ENCODE measurements at regions of chr7 and their contacts with region 1.

Region 1: DNA sequence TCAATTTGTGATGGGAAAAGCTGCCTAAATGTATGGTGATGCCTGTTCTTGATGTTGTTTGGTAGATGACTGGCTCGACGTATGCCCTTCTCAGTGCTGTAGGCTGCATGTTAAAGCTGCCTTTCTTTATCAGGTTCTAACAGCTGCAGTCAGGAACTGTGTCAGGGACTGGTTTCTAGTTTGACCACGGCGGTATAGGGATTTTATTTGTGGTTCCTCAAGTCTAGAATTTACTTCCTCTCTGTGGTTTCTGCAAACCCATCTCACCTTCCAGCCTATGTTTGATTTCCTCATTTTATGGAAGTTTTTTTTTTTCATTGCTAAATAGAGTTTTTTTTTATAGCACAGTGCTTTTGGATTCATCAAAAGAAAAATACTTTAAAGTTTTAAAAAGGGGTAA is 26.5 kb downstream of the LMTK2 start:
- DNase-seq: peak; percentile 5
- H3K4me3 Mint-ChIP-seq: peak overlapping the region; percentile 3
- H3K27ac Mint-ChIP-seq: peak overlapping the region; percentile 28
- H3K4me1 Mint-ChIP-seq: peaks cover 56% of the 10 kb centered on the region
- H3K27me3 Mint-ChIP-seq: no peaks in the 10 kb centered on the region
- CTCF ChIP-seq: no peak

Region 2: DNA sequence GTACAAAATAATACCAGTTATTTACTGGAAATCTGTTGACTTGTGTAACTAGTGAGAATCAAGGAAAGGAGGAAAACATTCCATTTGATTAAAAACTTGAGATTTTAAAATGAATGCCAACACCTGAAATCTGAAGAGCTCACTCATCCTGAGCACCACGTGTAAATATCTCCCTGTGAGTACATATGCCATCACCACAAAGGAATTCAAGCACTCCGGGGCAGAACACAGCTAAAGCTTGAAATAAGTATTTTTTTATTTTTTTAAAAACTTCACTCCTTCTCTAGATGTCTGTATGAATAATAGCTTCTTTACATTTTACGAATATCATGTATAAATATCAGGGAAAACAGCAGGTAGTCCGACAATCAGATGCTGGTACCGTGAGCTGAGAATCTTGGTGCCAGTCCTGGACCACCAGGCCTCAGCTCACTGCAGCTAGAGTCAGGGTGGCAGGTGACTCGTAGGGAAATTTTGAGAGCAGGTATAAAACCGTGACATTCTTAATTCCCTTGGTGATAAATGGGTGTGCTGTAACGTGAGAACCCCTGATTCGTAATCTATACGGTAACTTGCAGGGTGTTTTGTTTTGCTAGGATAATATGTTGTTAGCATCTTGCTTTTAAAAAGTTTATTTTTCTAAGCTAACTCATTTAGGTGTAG is 13.8 kb before region 1 on chr7:
- CTCF ChIA-PET with region 1: interaction called, 11 read pairs
- intact Hi-C with region 1: loop called (anchors 1 kb)
- DNase-seq: peak; percentile 5
- H3K4me3 Mint-ChIP-seq: peak overlapping the region; percentile 24
- H3K27ac Mint-ChIP-seq: no peak overlapping the region
- H3K4me1 Mint-ChIP-seq: peaks cover 50% of the 10 kb centered on the region
- H3K27me3 Mint-ChIP-seq: no peaks in the 10 kb centered on the region
- CTCF ChIP-seq: no peak

Region 3: GRCh38 chr7:98514211-98515031 is 381.2 kb after region 1 on chr7:
- CTCF ChIA-PET with region 1: no interaction called
- intact Hi-C with region 1: no loop called
- DNase-seq: no peak
- H3K4me3 Mint-ChIP-seq: no peak overlapping the region
- H3K27ac Mint-ChIP-seq: no peak overlapping the region
- H3K4me1 Mint-ChIP-seq: no peaks in the 10 kb centered on the region
- H3K27me3 Mint-ChIP-seq: peaks cover 20% of the 10 kb centered on the region
- CTCF ChIP-seq: no peak